ENCODE measurements at regions of chr12 and their contacts with region 1.

Region 1: DNA sequence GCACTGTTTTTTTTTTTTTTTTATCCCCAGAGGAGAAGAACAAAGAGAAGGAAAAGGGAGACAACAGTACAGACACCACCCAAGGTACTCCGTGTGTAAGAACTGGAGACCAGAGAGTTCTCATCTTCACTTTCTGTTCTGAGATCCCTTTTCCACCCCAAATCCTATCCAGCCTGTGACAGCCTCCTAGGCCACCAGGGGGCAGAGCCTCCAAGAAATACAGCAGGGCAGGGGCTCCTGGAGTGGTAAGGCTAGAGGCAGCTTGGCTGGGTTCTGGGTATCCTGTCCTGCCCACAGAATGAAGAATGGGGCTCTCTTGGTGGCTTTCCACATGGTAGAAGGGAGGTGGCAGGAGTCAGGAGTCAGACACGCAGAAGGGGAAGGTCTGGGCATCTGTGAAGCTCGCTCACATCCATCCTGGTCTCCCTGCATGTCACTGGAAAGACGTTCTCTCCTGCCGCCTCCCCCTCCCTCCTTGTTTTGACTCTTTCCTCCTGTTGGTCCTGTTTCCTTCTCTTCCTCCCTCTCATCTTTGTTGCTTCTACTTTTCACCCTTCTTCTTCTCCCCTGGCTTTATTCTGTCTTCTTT is 12.0 kb downstream of the CLSTN3 start:
- DNase-seq: peak; percentile 74
- ATAC-seq: peak; percentile 93
- H3K4me3 Mint-ChIP-seq: no peak overlapping the region
- H3K27ac Mint-ChIP-seq: no peak overlapping the region
- H3K4me1 Mint-ChIP-seq: no peaks in the 10 kb centered on the region
- H3K27me3 Mint-ChIP-seq: no peaks in the 10 kb centered on the region

Region 2: GRCh38 chr12:7155481-7156034 is 13.4 kb after region 1 on chr12:
- CTCF ChIA-PET with region 1: interaction called, 17 read pairs
- POLR2A ChIA-PET with region 1: no interaction called
- intact Hi-C with region 1: no loop called
- DNase-seq: no peak
- ATAC-seq: no peak
- H3K4me3 Mint-ChIP-seq: no peak overlapping the region
- H3K27ac Mint-ChIP-seq: no peak overlapping the region
- H3K4me1 Mint-ChIP-seq: no peaks in the 10 kb centered on the region
- H3K27me3 Mint-ChIP-seq: no peaks in the 10 kb centered on the region

Region 3: DNA sequence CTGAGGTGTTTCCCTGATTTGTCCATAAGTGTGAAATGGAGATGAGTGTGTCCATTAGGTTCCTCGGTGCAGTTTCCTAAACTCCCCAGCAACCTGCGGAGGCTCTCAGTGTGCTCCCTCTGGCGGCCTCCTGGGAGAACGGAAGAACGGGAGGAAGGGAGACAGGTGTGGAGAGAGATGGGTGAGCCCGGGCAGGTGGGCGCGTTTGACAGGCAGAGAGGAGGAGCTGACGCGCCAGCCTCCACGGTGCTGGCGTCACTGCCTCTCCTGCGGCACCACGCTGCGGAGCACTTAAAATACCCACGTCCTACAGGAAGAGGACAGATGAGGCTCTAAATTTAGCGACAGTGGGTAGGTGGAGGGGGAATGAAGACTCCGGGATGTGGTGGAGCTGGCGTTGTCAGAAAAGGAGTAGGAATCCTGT is 20.6 kb after region 1 on chr12:
- CTCF ChIA-PET with region 1: interaction called, 13 read pairs
- POLR2A ChIA-PET with region 1: no interaction called
- intact Hi-C with region 1: no loop called
- DNase-seq: peak; percentile 62
- ATAC-seq: peak; percentile 80
- H3K4me3 Mint-ChIP-seq: peak overlapping the region; percentile 15
- H3K27ac Mint-ChIP-seq: no peak overlapping the region
- H3K4me1 Mint-ChIP-seq: peaks cover 11% of the 10 kb centered on the region
- H3K27me3 Mint-ChIP-seq: peaks cover 14% of the 10 kb centered on the region